ENCODE measurements at regions of chr14 and their contacts with region 1.

Region 1: GRCh38 chr14:71591929-71592328 is 340.3 kb upstream of the RGS6 start:
- DNase-seq: peak; percentile 72
- H3K4me3 Mint-ChIP-seq: peak overlapping the region; percentile 48
- H3K27ac Mint-ChIP-seq: peak overlapping the region; percentile 58
- H3K4me1 Mint-ChIP-seq: peaks cover 51% of the 10 kb centered on the region
- H3K27me3 Mint-ChIP-seq: no peaks in the 10 kb centered on the region

Region 2: GRCh38 chr14:71659161-71659560 is 67.2 kb after region 1 on chr14:
- intact Hi-C with region 1: loop called (anchors 5 kb)
- DNase-seq: no peak
- H3K4me3 Mint-ChIP-seq: peak overlapping the region; percentile 40
- H3K27ac Mint-ChIP-seq: peak overlapping the region; percentile 61
- H3K4me1 Mint-ChIP-seq: peaks cover 16% of the 10 kb centered on the region
- H3K27me3 Mint-ChIP-seq: no peaks in the 10 kb centered on the region

Region 3: GRCh38 chr14:71711619-71712018 is 119.7 kb after region 1 on chr14:
- intact Hi-C with region 1: loop called (anchors 10 kb)
- DNase-seq: no peak
- H3K4me3 Mint-ChIP-seq: no peak overlapping the region
- H3K27ac Mint-ChIP-seq: peak overlapping the region; percentile 75
- H3K4me1 Mint-ChIP-seq: peaks cover 25% of the 10 kb centered on the region
- H3K27me3 Mint-ChIP-seq: no peaks in the 10 kb centered on the region

Region 4: GRCh38 chr14:71739273-71739937 is 147.5 kb after region 1 on chr14:
- intact Hi-C with region 1: no loop called
- DNase-seq: no peak
- H3K4me3 Mint-ChIP-seq: no peak overlapping the region
- H3K27ac Mint-ChIP-seq: no peak overlapping the region
- H3K4me1 Mint-ChIP-seq: peaks cover 3% of the 10 kb centered on the region
- H3K27me3 Mint-ChIP-seq: no peaks in the 10 kb centered on the region

Measured in activated CD4-positive, alpha-beta T cell treated with anti-CD3 and anti-CD28 coated beads, Interleukin-2, amount 10 ng/mL, durations not matched to agents 24 days and 14 days (primary cell).